HCT116 (cell line): ENCODE measurements at regions of chr22 and their contacts with region 1.

Region 1: GRCh38 chr22:32265882-32266767 is 11.0 kb upstream of the SLC5A4 start:
- DNase-seq: peak; percentile 44
- ATAC-seq: peak; percentile 85
- H3K4me3 ChIP-seq: no peak overlapping the region
- H3K27ac ChIP-seq: peak overlapping the region; percentile 13; the same call in 1 of the 2 replicates
- H3K4me1 ChIP-seq: peaks cover 3 to 5% of the 10 kb centered on the region in 2 experiments; a peak in 2 of 4 replicates
- H3K27me3 ChIP-seq: no peaks in the 10 kb centered on the region
- CTCF ChIP-seq: peak; percentile 58 to 87 (median 84)
- POLR2A ChIP-seq: no peak
- RAD21 ChIP-seq: peak; percentile 50

Region 2: GRCh38 chr22:32202539-32203180 is 63.5 kb before region 1 on chr22:
- CTCF ChIA-PET with region 1: interaction called, 10 read pairs
- POLR2A ChIA-PET with region 1: no interaction called
- RAD21 ChIA-PET with region 1: no interaction called
- intact Hi-C with region 1: no loop called
- DNase-seq: peak; percentile 50
- ATAC-seq: peak; percentile 55
- H3K4me3 ChIP-seq: no peak overlapping the region
- H3K27ac ChIP-seq: no peak overlapping the region
- H3K4me1 ChIP-seq: peaks cover 27 to 45% of the 10 kb centered on the region in 2 experiments
- H3K27me3 ChIP-seq: no peaks in the 10 kb centered on the region
- CTCF ChIP-seq: peak; percentile 62 to 73 (median 72); a peak in 5 of 6 replicates
- POLR2A ChIP-seq: no peak
- RAD21 ChIP-seq: peak; percentile 43; the same call in 1 of the 2 replicates

Region 3: DNA sequence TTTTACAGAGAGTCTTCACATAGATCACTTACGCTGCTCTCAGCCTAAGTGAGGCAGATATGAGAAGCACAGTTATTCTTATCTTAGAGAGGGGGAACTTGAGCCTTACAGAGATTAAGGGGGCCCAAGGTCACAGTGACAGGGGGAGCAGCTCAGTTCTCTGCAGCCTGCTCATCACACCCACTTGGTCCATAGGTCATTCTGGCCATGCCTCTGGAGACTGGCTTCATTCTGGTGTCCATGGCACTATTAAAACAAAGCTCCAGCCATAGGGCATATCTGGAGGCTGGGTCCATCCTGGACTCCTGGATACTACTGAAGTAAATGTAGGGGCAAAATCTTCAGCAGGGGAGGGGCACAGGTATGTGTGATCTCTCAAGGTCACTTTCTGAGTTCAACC is 16.9 kb before region 1 on chr22:
- CTCF ChIA-PET with region 1: interaction called, 11 read pairs
- POLR2A ChIA-PET with region 1: no interaction called
- RAD21 ChIA-PET with region 1: no interaction called
- intact Hi-C with region 1: no loop called
- DNase-seq: no peak
- ATAC-seq: no peak
- H3K4me3 ChIP-seq: no peak overlapping the region
- H3K27ac ChIP-seq: no peak overlapping the region
- H3K4me1 ChIP-seq: no peaks in the 10 kb centered on the region
- H3K27me3 ChIP-seq: no peaks in the 10 kb centered on the region
- CTCF ChIP-seq: no peak
- POLR2A ChIP-seq: no peak
- RAD21 ChIP-seq: no peak

Region 4: DNA sequence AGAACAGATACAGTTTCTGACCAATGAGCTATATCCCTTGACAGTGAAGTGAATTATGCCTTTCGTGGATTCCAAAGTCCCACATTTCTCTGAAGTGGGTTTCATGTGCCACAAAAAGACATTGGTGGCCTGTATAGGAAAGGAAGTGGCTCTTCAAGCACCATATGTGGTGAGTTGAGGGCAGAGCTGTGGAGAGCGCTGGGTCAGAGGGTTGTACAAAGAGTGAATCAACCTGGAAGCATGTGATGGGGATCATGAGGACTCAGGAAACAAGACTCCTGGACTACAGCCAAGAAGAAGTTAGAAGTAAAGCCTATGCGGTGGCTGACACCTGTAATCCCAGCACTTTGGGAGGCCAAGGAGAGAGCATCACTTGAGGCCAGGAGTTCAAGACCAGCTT is 10.4 kb before region 1 on chr22:
- CTCF ChIA-PET with region 1: interaction called, 12 read pairs
- POLR2A ChIA-PET with region 1: no interaction called
- RAD21 ChIA-PET with region 1: no interaction called
- intact Hi-C with region 1: no loop called
- DNase-seq: no peak
- ATAC-seq: no peak
- H3K4me3 ChIP-seq: no peak overlapping the region
- H3K27ac ChIP-seq: no peak overlapping the region
- H3K4me1 ChIP-seq: no peaks in the 10 kb centered on the region
- H3K27me3 ChIP-seq: no peaks in the 10 kb centered on the region
- CTCF ChIP-seq: no peak
- POLR2A ChIP-seq: no peak
- RAD21 ChIP-seq: no peak